ENCODE measurements at regions of chr1 and their contacts with region 1.

Region 1: GRCh38 chr1:76294482-76295194 is 220.1 kb downstream of the ST6GALNAC3 start:
- DNase-seq: peak in 3 of 14 experiments; percentile 40 to 64 (median 45)
- ATAC-seq: peak; percentile 73
- H3K4me3 ChIP-seq: peak overlapping the region; percentile 29
- H3K4me3 Mint-ChIP-seq: peak overlapping the region; percentile 72
- H3K27ac ChIP-seq: peak overlapping the region in 1 of 2 donors; percentile 45
- H3K27ac Mint-ChIP-seq: peak overlapping the region; percentile 58
- H3K4me1 ChIP-seq: peaks cover 23% of the 10 kb centered on the region
- H3K4me1 Mint-ChIP-seq: peaks cover 81% of the 10 kb centered on the region
- H3K27me3 ChIP-seq: no peaks in the 10 kb centered on the region
- H3K27me3 Mint-ChIP-seq: no peaks in the 10 kb centered on the region
- CTCF ChIP-seq: no peak

Region 2: DNA sequence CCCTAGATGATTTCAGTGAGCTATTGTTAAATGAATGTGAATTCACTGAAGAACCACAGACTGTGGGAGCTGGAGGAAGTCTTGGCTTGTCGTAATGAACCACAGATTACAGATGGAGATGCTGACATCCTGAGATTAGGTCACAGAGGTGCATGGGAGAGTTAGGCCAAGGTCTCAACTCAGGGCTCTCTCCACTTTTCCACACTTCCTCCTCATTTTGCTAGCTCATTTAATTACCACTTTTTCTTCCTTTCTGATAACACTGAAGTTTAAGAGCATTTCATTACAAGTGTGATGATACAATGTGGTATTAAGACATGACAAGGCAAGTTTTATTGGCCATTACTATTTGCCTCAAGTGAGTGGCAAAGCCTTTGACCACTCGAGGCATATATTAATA is 189.3 kb before region 1 on chr1:
- CTCF ChIA-PET with region 1: no interaction called
- POLR2A ChIA-PET with region 1: no interaction called
- intact Hi-C with region 1: no loop called
- DNase-seq: no peak
- ATAC-seq: no peak
- H3K4me3 ChIP-seq: no peak overlapping the region
- H3K4me3 Mint-ChIP-seq: no peak overlapping the region
- H3K27ac ChIP-seq: no peak overlapping the region
- H3K27ac Mint-ChIP-seq: no peak overlapping the region
- H3K4me1 ChIP-seq: no peaks in the 10 kb centered on the region
- H3K4me1 Mint-ChIP-seq: no peaks in the 10 kb centered on the region
- H3K27me3 ChIP-seq: peaks cover 0 to 4% of the 10 kb centered on the region in 2 experiments
- H3K27me3 Mint-ChIP-seq: peaks cover 10% of the 10 kb centered on the region
- CTCF ChIP-seq: no peak

Region 3: GRCh38 chr1:76254104-76255030 is 40.3 kb before region 1 on chr1:
- CTCF ChIA-PET with region 1: no interaction called
- POLR2A ChIA-PET with region 1: interaction called, 3 read pairs
- intact Hi-C with region 1: loop called in 1 of 2 experiments (anchors 5 kb)
- DNase-seq: no peak
- ATAC-seq: no peak
- H3K4me3 ChIP-seq: no peak overlapping the region
- H3K4me3 Mint-ChIP-seq: no peak overlapping the region
- H3K27ac ChIP-seq: no peak overlapping the region
- H3K27ac Mint-ChIP-seq: no peak overlapping the region
- H3K4me1 ChIP-seq: no peaks in the 10 kb centered on the region
- H3K4me1 Mint-ChIP-seq: peaks cover 55% of the 10 kb centered on the region
- H3K27me3 ChIP-seq: no peaks in the 10 kb centered on the region
- H3K27me3 Mint-ChIP-seq: no peaks in the 10 kb centered on the region
- CTCF ChIP-seq: no peak

Region 4: GRCh38 chr1:76281306-76281705 is 13.3 kb before region 1 on chr1:
- CTCF ChIA-PET with region 1: interaction called, 3 read pairs
- POLR2A ChIA-PET with region 1: interaction called, 12 read pairs
- intact Hi-C with region 1: no loop called
- DNase-seq: no peak
- ATAC-seq: no peak
- H3K4me3 ChIP-seq: no peak overlapping the region
- H3K4me3 Mint-ChIP-seq: no peak overlapping the region
- H3K27ac ChIP-seq: no peak overlapping the region
- H3K27ac Mint-ChIP-seq: no peak overlapping the region
- H3K4me1 ChIP-seq: peaks cover 16% of the 10 kb centered on the region
- H3K4me1 Mint-ChIP-seq: peaks cover 29% of the 10 kb centered on the region
- H3K27me3 ChIP-seq: no peaks in the 10 kb centered on the region
- H3K27me3 Mint-ChIP-seq: no peaks in the 10 kb centered on the region
- CTCF ChIP-seq: no peak

Measured in CD4-positive, alpha-beta T cell (primary cell).